Dorsolateral prefrontal cortex (tissue), 120 donors: ENCODE measurements at regions of chr13 and their contacts with region 1.

Region 1: GRCh38 chr13:107650081-107650701 is 565.1 kb downstream of the LIG4 start:
- DNase-seq: peak in 9 of 10 donors; percentile 25 to 71 (median 41)
- H3K4me3 ChIP-seq: no peak overlapping the region
- H3K27ac ChIP-seq: no peak overlapping the region
- H3K27me3 ChIP-seq: no peaks in the 10 kb centered on the region
- CTCF ChIP-seq: peak; percentile 69 to 94 (median 85)

Region 2: GRCh38 chr13:107211073-107211472 is 439.1 kb before region 1 on chr13:
- intact Hi-C with region 1: loop called (anchors 1 to 5 kb)
- DNase-seq: peak; percentile 59 to 93 (median 84)
- H3K4me3 ChIP-seq: peak overlapping the region in 58 of 59 donors; percentile 9 to 64 (median 44)
- H3K27ac ChIP-seq: peak overlapping the region in 32 of 59 donors; percentile 0 to 67 (median 38)
- H3K27me3 ChIP-seq: no peaks in the 10 kb centered on the region
- CTCF ChIP-seq: peak; percentile 79 to 99 (median 96)

Region 3: DNA sequence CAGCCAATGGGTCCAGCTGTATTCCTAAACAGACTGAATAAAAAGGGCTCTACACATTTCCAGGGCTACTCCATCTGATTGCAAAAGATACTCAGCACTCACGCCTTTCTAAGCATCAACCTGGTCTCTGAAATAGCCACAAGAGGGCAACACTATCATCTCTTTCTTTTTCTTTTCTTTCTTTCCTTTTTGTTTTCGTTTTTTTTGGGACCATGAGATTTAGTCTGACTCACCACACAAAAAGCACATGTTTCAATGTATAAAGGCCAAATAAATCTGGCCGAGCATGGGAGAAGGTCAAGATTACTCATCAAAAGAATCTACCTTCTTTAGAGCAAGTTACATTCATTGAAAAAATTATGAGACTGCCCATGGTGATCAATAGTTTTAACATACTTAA is 276.6 kb before region 1 on chr13:
- intact Hi-C with region 1: loop called in 1 of 2 experiments (anchors 10 kb)
- DNase-seq: no peak
- H3K4me3 ChIP-seq: peak overlapping the region in 23 of 59 donors; percentile 3 to 35 (median 15)
- H3K27ac ChIP-seq: peak overlapping the region in 1 of 59 donors; percentile 4
- H3K27me3 ChIP-seq: no peaks in the 10 kb centered on the region
- CTCF ChIP-seq: peak; percentile 30 to 82 (median 68)